Gastrocnemius medialis (tissue), 4 donors: ENCODE measurements at regions of chr5 and their contacts with region 1.

Region 1: DNA sequence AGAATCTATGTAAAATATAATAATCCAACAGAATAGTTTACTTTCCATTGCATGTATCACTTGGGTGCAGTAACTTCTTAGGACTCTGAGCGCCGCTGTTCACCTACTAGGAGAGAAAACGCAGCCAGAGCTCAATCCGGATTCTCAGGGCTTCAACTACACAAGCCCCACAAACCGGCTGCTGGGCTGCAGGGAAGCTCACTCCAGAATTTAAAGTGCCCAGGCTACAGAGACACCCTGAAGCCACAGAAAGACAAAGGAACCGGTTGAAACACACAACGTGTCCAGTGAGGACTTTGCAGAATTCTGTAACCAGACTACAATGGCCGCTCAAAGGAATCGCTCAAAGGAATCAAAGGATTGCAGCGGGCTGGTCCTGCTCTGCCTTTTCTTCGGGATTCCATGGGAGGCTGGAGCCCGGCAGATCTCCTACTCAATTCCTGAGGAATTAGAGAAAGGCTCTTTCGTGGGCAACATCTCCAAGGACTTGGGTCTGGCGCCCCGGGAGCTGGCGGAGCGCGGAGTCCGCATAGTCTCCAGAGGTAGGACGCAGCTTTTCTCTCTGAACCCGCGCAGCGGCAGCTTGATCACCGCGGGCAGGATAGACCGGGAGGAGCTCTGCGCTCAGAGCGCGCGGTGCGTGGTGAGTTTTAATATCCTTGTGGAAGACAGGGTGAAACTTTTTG is at the start of gene PCDHGA10:
- DNase-seq: peak in 1 of 2 donors; percentile 55
- ATAC-seq: peak; percentile 63 to 64
- H3K4me3 ChIP-seq: peak within 1 kb of the TSS; percentile 35 to 50 (median 46)
- H3K27ac ChIP-seq: peak within 1 kb of the TSS; percentile 24 to 61 (median 41)
- H3K4me1 ChIP-seq: peaks cover 0 to 15% of the 10 kb centered on the region in 2 donors
- H3K27me3 ChIP-seq: no peaks in the 10 kb centered on the region
- CTCF ChIP-seq: peak; percentile 40 to 71 (median 57)
- POLR2A ChIP-seq: no peak
- total RNA-seq, gene PCDHGA10: 0.80 to 2.4 (median 1.2) TPM

Region 2: DNA sequence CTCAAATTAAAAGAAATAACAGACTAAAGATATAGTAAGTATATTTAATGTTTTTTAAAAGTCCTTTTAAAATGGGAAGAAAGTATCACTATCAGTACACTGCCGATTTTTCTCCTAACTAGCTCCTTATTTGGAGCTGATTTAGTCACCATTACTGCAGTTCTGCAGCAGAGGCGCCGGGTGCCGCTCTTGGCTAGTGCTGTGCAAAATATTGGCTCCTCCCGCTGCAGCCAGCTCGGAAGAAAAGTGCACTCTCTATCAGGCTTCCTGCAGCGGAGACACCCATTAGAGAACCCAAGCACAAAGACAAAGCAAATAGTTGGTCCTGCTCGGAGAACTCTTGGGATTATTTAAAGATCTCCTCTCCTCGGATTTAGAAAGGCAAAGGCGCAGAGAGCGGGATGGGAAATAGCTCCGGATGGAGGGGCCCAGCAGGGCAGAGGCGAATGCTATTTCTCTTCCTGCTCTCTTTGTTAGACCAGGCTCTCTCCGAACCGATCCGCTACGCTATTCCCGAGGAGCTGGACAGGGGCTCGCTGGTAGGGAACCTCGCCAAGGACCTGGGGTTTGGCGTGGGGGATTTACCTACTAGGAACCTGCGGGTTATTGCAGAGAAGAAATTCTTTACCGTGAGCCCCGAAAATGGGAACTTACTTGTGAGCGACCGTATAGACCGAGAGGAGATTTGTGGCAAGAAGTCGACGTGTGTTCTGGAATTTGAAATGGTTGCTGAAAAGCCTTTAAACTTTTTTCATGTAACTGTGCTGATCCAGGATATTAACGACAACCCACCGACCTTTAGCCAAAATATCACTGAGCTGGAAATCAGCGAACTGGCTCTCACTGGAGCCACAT is 42.8 kb before region 1 on chr5 and contains the start of gene PCDHGB3:
- in situ Hi-C with region 1: no loop called
- intact Hi-C with region 1: loop called (anchors 5 kb)
- DNase-seq: peak in 1 of 2 donors; percentile 45
- ATAC-seq: peak; percentile 62 to 87
- H3K4me3 ChIP-seq: peak within 1 kb of the TSS; percentile 7 to 50 (median 37)
- H3K27ac ChIP-seq: peak within 1 kb of the TSS in 1 of 4 donors; percentile 16
- H3K4me1 ChIP-seq: peaks cover 0 to 4% of the 10 kb centered on the region in 2 donors
- H3K27me3 ChIP-seq: peaks cover 0 to 21% (median 20%) of the 10 kb centered on the region in 3 donors
- CTCF ChIP-seq: peak in 2 of 5 experiments; percentile 19 to 43
- POLR2A ChIP-seq: no peak
- total RNA-seq, gene PCDHGB3: 0.29 to 2.0 (median 1.2) TPM